Colonic mucosa (tissue), 4 donors: ENCODE measurements at regions of chrX and their contacts with region 1.

Region 1: DNA sequence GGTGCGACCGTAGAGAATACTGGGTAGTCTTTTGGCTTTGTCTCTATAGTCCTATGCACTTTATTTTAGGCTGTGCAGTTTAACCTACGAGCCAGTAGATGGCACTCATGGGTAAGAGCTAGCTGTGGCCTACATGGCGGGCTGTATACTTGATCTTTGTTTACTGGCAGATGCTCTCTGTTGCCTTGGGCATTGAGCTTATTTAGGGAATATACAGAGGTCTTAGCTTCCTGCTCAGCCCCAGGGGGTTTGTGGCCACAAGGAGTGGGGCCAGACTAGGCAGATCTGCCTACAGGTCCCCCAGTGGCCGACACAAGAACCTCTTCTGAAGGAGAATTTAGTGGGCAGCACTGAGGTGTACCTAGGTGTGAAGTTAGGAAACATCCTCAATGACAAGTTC is 227.6 kb upstream of the HDX start:
- DNase-seq: no peak
- H3K4me3 ChIP-seq: no peak overlapping the region
- H3K27ac ChIP-seq: no peak overlapping the region
- H3K4me1 ChIP-seq: no peaks in the 10 kb centered on the region
- H3K27me3 ChIP-seq: no peaks in the 10 kb centered on the region
- CTCF ChIP-seq: peak; percentile 82

Region 2: GRCh38 chrX:84907324-84907968 is 177.6 kb after region 1 on chrX:
- intact Hi-C with region 1: loop called (anchors 5 kb)
- DNase-seq: no peak
- H3K4me3 ChIP-seq: no peak overlapping the region
- H3K27ac ChIP-seq: no peak overlapping the region
- H3K4me1 ChIP-seq: no peaks in the 10 kb centered on the region
- H3K27me3 ChIP-seq: no peaks in the 10 kb centered on the region
- CTCF ChIP-seq: no peak

Region 3: DNA sequence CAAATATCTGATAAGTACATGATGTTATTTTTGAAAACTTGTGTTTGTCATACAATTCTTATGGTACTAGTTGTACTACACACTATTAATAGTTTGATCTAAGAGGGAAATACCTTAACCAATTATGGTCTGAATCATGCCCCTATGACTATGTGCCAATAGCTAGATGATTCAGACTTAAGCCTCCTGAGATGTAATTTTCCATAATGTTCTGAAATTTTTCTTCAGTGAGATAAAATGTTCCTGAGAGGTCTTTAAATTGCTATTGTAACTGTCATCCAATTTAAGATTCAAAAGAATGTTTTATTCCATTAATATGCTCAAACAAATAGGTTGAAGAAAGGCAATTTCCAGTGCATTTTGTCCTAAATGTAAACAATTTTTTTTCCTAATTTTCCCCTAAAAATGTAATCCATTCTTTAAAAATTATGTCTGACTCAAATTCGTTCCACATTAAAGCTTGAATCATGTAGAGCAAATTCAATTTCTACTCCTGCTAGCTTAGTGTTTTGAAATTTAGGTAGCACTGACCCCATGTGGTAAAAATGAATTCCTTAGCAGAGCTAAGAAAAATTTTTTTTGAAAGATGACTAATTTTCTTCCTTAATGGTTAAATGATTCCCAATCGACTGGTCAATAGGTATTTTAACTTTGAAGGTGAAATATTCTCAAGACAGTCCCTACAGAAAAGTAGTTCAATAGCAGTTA is 323.0 kb after region 1 on chrX:
- intact Hi-C with region 1: loop called (anchors 5 kb)
- DNase-seq: no peak
- H3K4me3 ChIP-seq: no peak overlapping the region
- H3K27ac ChIP-seq: no peak overlapping the region
- H3K4me1 ChIP-seq: no peaks in the 10 kb centered on the region
- H3K27me3 ChIP-seq: no peaks in the 10 kb centered on the region
- CTCF ChIP-seq: no peak